Activated CD8-positive, alpha-beta T cell treated with anti-CD3 and anti-CD28 coated beads for 36 hours (primary cell): ENCODE measurements at regions of chr5 and their contacts with region 1.

Region 1: GRCh38 chr5:175534070-175534932 is 55.9 kb downstream of the SFXN1 start:
- DNase-seq: peak; percentile 90
- ATAC-seq: peak; percentile 94
- H3K4me3 Mint-ChIP-seq: peak overlapping the region; percentile 57
- H3K27ac Mint-ChIP-seq: peak overlapping the region; percentile 67
- H3K4me1 Mint-ChIP-seq: peaks cover 59% of the 10 kb centered on the region
- H3K27me3 Mint-ChIP-seq: no peaks in the 10 kb centered on the region
- CTCF ChIP-seq: peak; percentile 100

Region 2: GRCh38 chr5:175464074-175464941 is 70.0 kb before region 1 on chr5:
- CTCF ChIA-PET with region 1: interaction called, 17 read pairs
- POLR2A ChIA-PET with region 1: no interaction called
- intact Hi-C with region 1: no loop called
- DNase-seq: peak; percentile 85
- ATAC-seq: peak; percentile 98
- H3K4me3 Mint-ChIP-seq: no peak overlapping the region
- H3K27ac Mint-ChIP-seq: peak overlapping the region; percentile 53
- H3K4me1 Mint-ChIP-seq: peaks cover 24% of the 10 kb centered on the region
- H3K27me3 Mint-ChIP-seq: no peaks in the 10 kb centered on the region
- CTCF ChIP-seq: peak; percentile 84

Region 3: DNA sequence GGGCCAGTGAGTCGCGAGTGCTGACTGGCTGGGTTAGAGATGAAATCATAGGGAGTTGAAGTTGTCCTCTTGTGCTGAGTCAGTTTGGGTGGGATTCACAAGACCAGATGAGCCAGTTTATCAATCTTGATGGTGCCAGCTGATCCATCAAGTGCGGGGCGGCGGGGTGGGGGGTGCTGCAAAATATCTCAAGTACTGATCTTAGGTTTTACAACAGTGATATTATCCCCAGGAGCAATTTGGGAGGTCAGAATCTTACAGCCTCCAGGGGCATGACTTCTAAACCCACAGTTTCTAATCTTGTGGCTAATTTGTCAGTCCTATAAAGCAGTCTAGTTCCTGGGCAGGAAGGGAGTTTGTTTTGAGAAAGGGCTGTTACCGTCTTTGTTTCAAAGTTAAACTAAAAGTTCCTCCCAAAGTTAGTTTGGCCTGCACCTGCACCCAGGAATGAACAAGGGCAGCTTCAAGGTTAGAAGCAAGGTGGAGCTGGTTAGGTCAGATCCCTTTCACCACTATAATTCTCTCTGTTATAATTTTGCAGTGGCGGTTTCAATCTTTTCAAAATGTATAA is 25.6 kb after region 1 on chr5:
- CTCF ChIA-PET with region 1: interaction called, 25 read pairs
- POLR2A ChIA-PET with region 1: no interaction called
- intact Hi-C with region 1: no loop called
- DNase-seq: no peak
- ATAC-seq: no peak
- H3K4me3 Mint-ChIP-seq: no peak overlapping the region
- H3K27ac Mint-ChIP-seq: no peak overlapping the region
- H3K4me1 Mint-ChIP-seq: peaks cover 2% of the 10 kb centered on the region
- H3K27me3 Mint-ChIP-seq: peaks cover 5% of the 10 kb centered on the region
- CTCF ChIP-seq: no peak

Region 4: GRCh38 chr5:175609526-175609925 is 75.2 kb after region 1 on chr5:
- CTCF ChIA-PET with region 1: interaction called, 15 read pairs
- POLR2A ChIA-PET with region 1: no interaction called
- intact Hi-C with region 1: no loop called
- DNase-seq: peak; percentile 44
- ATAC-seq: no peak
- H3K4me3 Mint-ChIP-seq: no peak overlapping the region
- H3K27ac Mint-ChIP-seq: no peak overlapping the region
- H3K4me1 Mint-ChIP-seq: peaks cover 17% of the 10 kb centered on the region
- H3K27me3 Mint-ChIP-seq: no peaks in the 10 kb centered on the region
- CTCF ChIP-seq: no peak

Region 5: GRCh38 chr5:175657593-175658271 is 123.4 kb after region 1 on chr5 and contains the start of gene HRH2:
- CTCF ChIA-PET with region 1: interaction called, 105 read pairs
- POLR2A ChIA-PET with region 1: interaction called, 3 read pairs
- intact Hi-C with region 1: loop called (anchors 2 kb)
- DNase-seq: peak; percentile 75
- ATAC-seq: peak; percentile 47
- H3K4me3 Mint-ChIP-seq: peak within 1 kb of the TSS; percentile 84
- H3K27ac Mint-ChIP-seq: peak within 1 kb of the TSS; percentile 84
- H3K4me1 Mint-ChIP-seq: peaks cover 72% of the 10 kb centered on the region
- H3K27me3 Mint-ChIP-seq: no peaks in the 10 kb centered on the region
- CTCF ChIP-seq: no peak
- total RNA-seq, gene HRH2: 23.2 to 24.5 TPM

Region 6: DNA sequence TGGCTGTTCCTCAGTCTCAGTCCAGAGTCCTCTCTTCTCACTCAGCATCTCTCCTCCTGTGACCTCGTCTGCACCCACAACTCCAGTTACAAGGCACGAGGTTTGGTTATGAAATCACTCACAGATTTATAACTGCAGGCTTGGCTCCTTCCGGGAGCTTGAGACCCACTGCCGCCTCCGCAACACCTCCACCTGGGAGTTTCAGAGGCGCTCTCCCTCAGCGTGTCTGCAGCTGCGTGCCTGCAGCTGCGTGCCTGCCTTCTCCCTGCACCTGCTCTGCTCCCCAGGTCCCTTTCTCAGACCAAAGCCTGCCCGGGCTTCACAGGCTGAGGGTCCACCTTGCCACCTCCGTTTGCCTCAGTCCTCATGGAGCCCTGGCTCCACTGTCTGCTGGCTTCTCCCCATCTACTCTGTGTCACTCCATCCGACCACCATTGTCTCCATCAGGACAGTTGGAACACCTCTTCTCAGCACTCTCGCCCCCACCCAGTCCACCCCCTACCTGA is 175.0 kb after region 1 on chr5:
- CTCF ChIA-PET with region 1: interaction called, 87 read pairs
- POLR2A ChIA-PET with region 1: interaction called, 4 read pairs
- intact Hi-C with region 1: no loop called
- DNase-seq: no peak
- ATAC-seq: no peak
- H3K4me3 Mint-ChIP-seq: no peak overlapping the region
- H3K27ac Mint-ChIP-seq: no peak overlapping the region
- H3K4me1 Mint-ChIP-seq: peaks cover 3% of the 10 kb centered on the region
- H3K27me3 Mint-ChIP-seq: no peaks in the 10 kb centered on the region
- CTCF ChIP-seq: no peak

Region 7: GRCh38 chr5:175746851-175747250 is 212.6 kb after region 1 on chr5:
- CTCF ChIA-PET with region 1: no interaction called
- POLR2A ChIA-PET with region 1: no interaction called
- intact Hi-C with region 1: no loop called
- DNase-seq: no peak
- ATAC-seq: no peak
- H3K4me3 Mint-ChIP-seq: no peak overlapping the region
- H3K27ac Mint-ChIP-seq: no peak overlapping the region
- H3K4me1 Mint-ChIP-seq: peaks cover 3% of the 10 kb centered on the region
- H3K27me3 Mint-ChIP-seq: peaks cover 21% of the 10 kb centered on the region
- CTCF ChIP-seq: no peak